RWPE1 (cell line): ENCODE measurements at regions of chr10 and their contacts with region 1.

Region 1: DNA sequence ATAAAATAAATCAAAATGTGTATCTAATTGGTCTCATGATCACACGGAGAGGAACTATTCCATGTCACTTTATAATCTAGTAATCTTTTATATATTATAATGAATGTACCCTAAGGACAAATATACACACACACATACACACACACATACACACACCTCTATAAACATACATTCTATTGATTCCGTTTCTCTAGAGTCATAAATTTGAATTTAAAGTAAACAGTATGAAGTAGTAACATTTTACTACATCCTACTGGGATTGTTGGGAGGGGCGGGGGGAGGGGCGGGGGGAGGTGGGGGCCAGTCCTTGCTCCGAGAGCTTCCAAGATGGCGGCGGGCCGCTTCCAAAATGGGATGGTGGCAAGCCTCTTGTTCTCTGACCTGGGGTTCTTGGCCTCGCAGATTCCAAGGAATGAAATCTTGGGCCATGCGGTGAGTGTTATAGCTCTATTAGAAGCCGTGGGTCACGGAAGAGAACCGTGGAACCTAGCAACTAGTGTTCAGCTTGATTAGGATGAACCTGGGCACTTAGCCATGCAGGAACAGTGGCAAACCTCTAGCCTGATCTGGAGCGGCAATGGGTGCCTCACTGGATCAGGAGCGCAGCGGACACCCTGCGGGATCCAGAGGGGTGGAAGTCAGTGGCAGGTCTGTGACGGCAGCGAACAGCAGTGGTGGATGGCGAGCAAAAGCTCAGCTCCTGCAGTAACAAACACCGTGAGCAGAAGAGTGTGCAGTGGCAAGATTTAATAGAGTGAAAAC is 143.3 kb downstream of the REEP3 start:
- DNase-seq: no peak
- H3K27ac ChIP-seq: no peak overlapping the region
- CTCF ChIP-seq: no peak

Region 2: DNA sequence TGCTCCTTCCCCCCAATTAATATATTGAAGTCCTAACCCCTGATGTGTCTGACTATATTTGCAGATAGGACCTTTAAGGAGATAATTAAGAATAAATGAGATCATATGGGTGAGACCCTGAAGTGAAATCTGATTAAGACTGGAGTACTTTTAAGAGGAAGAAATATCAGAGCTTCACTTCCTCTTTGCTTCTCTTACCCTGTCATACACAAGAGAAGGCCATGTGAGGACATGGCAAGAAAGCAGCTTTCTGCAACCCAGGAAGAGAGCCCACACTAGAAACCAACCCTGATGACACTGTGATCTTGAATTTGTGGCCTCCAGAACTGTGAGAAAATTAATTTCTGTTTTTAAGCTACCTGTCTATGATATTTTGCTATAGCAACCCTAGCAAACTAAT is 242.9 kb before region 1 on chr10:
- CTCF ChIA-PET with region 1: no interaction called
- POLR2A ChIA-PET with region 1: no interaction called
- DNase-seq: no peak
- H3K27ac ChIP-seq: no peak overlapping the region
- CTCF ChIP-seq: no peak

Region 3: DNA sequence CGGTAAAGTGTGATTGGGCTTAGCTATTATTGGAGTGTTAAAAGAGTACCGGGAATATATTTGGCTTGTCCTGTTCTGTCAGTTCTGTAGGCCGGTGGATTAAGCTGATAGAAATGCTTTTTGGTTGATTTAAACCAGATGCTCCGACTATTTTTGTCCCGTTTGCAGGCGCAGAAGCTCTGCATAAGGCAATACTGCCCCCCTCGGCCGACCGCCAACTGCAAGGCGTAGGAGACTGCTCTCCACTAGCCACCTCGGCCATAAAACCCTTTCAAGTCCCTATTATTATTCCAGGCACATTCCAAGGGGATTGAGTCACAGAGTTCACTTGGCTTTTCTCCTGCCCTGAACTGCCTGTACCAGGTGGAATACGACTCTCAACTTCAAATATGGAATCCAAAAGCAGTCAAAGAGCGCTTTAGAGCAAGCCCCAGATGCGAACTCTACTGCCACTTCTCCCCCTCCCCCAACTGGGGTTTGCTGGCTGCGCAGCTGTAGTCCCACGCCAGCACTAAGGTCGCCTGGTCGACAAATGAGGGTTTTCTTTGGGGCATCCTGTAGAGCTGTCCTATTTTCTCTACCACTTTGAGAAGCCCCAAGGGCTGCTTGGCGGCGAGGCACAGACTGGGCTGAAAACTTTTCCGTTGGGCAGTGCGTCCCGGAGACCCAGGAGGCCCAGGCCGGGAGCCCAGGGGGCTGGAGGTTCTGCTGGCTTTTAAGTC is 35.0 kb before region 1 on chr10:
- CTCF ChIA-PET with region 1: no interaction called
- POLR2A ChIA-PET with region 1: no interaction called
- DNase-seq: peak; percentile 95
- H3K27ac ChIP-seq: peak overlapping the region; percentile 100
- CTCF ChIP-seq: peak; percentile 83

Region 4: GRCh38 chr10:63651864-63652263 is 12.7 kb before region 1 on chr10:
- CTCF ChIA-PET with region 1: no interaction called
- POLR2A ChIA-PET with region 1: no interaction called
- DNase-seq: no peak
- H3K27ac ChIP-seq: no peak overlapping the region
- CTCF ChIP-seq: no peak

Region 5: DNA sequence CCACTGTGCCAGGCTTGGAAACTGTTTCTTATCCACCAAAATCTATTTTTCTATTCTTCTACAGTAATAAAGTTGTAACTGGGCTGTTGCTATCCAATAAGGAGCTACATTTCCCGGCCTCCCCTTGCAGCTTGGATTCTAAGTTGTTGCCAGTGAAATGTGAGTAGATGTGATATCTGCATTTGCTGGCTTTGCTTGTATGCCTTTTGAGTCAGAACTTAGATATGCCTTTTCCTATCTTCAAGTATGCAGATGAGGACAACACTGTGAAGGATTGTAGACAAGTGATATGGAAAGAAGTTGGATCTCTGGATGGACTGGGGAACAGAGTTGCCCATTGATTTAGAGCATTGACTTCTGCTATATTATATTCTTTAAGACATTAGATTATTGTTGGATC is 93.6 kb after region 1 on chr10:
- CTCF ChIA-PET with region 1: no interaction called
- POLR2A ChIA-PET with region 1: interaction called, 11 read pairs
- DNase-seq: no peak
- H3K27ac ChIP-seq: no peak overlapping the region
- CTCF ChIP-seq: no peak

Region 6: DNA sequence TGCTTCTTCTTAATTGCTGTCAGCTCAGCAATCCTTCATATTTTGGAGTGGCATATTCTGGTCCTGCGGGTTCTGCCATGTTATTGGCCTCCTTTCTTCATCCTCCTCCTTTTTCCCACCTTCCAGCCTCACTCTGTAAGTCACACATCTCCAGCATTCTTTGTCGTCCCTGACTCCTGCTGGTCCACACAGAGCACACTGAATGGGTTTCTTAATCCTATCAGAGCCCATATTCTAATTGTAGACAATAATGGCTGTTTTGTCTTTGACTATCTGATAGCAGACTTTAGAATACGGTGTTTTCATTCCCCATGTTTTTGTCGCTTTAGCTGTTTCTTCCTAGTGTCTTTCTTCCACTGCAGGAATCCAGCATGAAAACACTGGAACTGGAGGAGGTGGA is 246.3 kb after region 1 on chr10:
- CTCF ChIA-PET with region 1: no interaction called
- POLR2A ChIA-PET with region 1: no interaction called
- DNase-seq: no peak
- H3K27ac ChIP-seq: no peak overlapping the region
- CTCF ChIP-seq: no peak